ENCODE measurements at regions of chr15 and their contacts with region 1.

Region 1: GRCh38 chr15:59688841-59689625 is at the start of gene BNIP2:
- DNase-seq: peak; percentile 97
- ATAC-seq: peak; percentile 87
- H3K4me3 Mint-ChIP-seq: peak within 1 kb of the TSS; percentile 92
- H3K27ac Mint-ChIP-seq: peak within 1 kb of the TSS; percentile 96
- H3K4me1 Mint-ChIP-seq: peaks cover 52% of the 10 kb centered on the region
- H3K27me3 Mint-ChIP-seq: no peaks in the 10 kb centered on the region
- CTCF ChIP-seq: no peak
- total RNA-seq, gene BNIP2: 80.1 and 82.9 TPM in 2 replicates

Region 2: DNA sequence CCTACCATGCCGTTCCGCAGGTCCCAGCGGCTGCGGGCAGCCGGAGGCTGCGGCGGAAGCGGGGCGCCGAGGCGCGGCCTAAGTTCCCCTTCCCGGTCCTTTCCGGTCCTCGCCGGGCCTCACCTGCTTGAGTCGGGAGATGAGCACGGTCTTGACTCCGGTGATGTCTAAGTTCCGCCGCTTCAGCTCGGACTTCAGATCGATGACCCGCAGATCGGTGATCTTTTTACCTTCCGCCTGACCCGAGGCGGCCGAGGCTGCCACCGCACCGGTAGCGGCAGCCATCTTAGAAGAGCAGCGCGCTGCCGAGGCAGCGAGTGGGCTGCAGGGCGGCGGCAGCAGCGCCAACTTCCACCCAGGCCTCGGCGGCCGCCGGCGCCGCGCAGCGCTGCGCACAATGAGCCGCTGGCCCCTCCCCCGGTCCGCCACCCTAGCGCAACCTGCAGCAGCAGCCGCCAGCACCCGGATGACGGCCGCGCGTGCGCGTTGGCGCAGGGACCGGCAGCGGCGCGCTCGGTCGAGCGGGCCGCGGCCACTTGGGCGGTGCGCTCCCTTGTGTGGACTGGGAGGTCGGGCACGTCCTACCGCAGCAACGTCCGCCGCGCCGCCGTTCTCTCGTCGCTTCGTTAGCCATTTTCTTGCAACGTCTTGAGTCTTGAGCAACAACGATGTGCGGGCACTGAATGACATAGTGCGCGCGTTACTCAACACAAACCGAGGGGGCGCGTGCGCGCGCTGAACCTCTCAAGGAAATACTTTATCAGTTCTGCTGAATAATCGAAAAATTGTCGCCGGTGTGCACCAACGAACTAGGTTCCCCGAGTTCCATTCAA is 755.5 kb before region 1 on chr15 and contains the start of gene SLTM:
- CTCF ChIA-PET with region 1: no interaction called
- POLR2A ChIA-PET with region 1: no interaction called
- intact Hi-C with region 1: loop called (anchors 1 kb)
- DNase-seq: peak; percentile 87
- ATAC-seq: peak; percentile 91
- H3K4me3 Mint-ChIP-seq: peak within 1 kb of the TSS; percentile 99
- H3K27ac Mint-ChIP-seq: peak within 1 kb of the TSS; percentile 100
- H3K4me1 Mint-ChIP-seq: peaks cover 29% of the 10 kb centered on the region
- H3K27me3 Mint-ChIP-seq: no peaks in the 10 kb centered on the region
- CTCF ChIP-seq: no peak
- total RNA-seq, gene SLTM: 124 and 159 TPM in 2 replicates

Region 3: DNA sequence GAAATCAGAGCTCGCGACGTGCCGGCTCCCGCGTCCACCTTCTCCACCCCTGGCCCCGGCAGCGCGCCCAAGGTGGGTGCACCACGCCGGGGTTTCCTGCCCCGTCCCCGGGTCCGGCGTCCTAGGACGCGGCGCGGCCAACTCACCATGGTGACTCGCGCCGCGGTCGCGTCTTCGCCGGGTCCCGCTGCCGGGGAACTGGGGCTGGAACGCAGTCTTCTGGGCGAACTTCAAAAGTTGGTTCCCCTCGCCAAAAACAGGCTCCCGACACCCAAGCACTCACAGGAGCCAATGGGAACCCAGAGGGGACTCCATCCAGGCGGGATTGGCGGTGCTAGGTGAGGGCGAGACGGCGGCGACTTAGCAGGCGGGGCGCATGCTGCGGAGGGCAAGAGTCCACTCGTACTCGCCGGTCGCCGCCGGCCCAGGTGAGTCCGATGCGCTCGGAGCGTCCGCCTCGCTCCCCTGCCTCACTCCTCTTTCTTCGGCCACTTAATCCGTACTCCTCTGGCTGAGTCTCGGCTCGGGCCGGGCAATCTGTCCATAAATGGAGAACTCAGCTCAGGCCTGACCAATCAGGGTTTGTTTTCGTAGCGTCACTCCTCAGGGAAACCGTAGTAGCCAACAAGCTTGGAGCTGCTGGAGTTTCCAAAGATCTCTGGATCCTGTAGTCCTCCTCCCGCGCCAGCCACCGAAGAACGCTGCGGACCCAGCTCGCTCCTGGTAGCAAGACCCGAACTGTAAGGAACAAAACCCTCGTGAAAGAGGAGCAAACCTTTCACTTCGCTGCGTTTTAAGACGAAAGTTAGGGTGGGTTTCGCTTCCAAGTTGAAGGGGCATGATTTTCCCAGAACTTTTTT is 316.5 kb before region 1 on chr15 and contains the start of gene MYO1E:
- CTCF ChIA-PET with region 1: no interaction called
- POLR2A ChIA-PET with region 1: no interaction called
- intact Hi-C with region 1: loop called (anchors 2 kb)
- DNase-seq: peak; percentile 54
- ATAC-seq: peak; percentile 62
- H3K4me3 Mint-ChIP-seq: peak within 1 kb of the TSS; percentile 96
- H3K27ac Mint-ChIP-seq: peak within 1 kb of the TSS; percentile 89
- H3K4me1 Mint-ChIP-seq: peaks cover 64% of the 10 kb centered on the region
- H3K27me3 Mint-ChIP-seq: no peaks in the 10 kb centered on the region
- CTCF ChIP-seq: no peak
- total RNA-seq, gene MYO1E: 185 and 186 TPM in 2 replicates

Region 4: DNA sequence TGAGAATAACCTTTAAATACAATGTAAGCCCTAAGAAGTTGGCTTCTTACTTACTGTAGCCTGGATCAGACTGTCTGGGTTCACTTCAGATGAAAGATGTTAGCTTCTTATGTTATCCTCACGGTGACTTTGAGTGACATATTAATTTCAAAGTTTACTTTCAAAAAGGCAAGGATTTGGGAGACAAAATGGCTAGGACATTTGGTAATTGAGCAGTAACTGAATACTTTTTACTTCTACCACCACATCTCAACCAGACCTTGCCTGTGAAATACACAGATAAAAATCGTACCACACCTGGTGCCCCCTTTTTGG is 36.1 kb after region 1 on chr15:
- CTCF ChIA-PET with region 1: interaction called, 9 read pairs
- POLR2A ChIA-PET with region 1: interaction called, 3 read pairs
- intact Hi-C with region 1: loop called (anchors 1 kb)
- DNase-seq: no peak
- ATAC-seq: no peak
- H3K4me3 Mint-ChIP-seq: no peak overlapping the region
- H3K27ac Mint-ChIP-seq: no peak overlapping the region
- H3K4me1 Mint-ChIP-seq: no peaks in the 10 kb centered on the region
- H3K27me3 Mint-ChIP-seq: peaks cover 18% of the 10 kb centered on the region
- CTCF ChIP-seq: no peak

Region 5: GRCh38 chr15:60326824-60327654 is 638.0 kb after region 1 on chr15:
- CTCF ChIA-PET with region 1: interaction called, 21 read pairs
- POLR2A ChIA-PET with region 1: no interaction called
- intact Hi-C with region 1: loop called (anchors 1 kb)
- DNase-seq: no peak
- ATAC-seq: peak; percentile 37
- H3K4me3 Mint-ChIP-seq: no peak overlapping the region
- H3K27ac Mint-ChIP-seq: no peak overlapping the region
- H3K4me1 Mint-ChIP-seq: peaks cover 4% of the 10 kb centered on the region
- H3K27me3 Mint-ChIP-seq: peaks cover 35% of the 10 kb centered on the region
- CTCF ChIP-seq: no peak

Region 6: DNA sequence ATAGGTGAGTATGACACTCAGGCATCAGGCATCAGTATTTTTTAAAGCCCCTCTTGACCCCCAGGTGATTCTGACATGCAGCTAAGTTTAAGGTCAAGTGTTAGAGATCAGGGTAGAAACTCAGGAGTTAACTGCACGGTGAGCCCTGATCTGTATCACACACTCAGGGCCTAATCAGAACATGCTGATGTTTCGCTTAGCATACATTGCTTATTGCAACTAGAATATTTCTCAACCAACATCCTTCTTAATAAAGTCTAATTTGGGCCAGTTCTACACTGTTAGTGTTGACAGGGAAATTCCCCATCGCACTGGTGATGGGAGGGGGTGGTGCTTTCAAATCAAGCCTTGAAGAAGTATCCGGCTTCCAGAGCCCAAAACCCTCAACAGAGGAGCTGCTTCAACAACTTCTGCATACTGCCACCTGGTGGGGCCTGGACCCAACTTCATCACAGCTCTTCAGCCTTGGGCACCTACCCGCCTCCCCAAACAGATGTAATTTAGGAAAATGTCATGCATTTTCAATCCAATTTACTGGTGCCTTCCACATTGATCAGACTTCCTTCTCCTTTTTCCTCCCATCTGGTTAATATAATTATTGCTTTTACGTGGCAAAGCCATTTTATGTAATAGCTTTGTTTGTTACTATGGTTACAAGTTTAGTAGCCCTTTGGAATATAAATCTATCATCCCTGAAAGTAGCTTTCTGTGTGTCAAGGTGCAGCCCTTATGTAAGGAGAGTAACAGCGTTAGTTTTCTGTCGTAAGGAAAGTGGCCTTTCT is 1227.8 kb after region 1 on chr15:
- CTCF ChIA-PET with region 1: interaction called, 6 read pairs
- POLR2A ChIA-PET with region 1: no interaction called
- intact Hi-C with region 1: loop called (anchors 5 kb)
- DNase-seq: peak; percentile 47
- ATAC-seq: peak; percentile 97
- H3K4me3 Mint-ChIP-seq: peak overlapping the region; percentile 58
- H3K27ac Mint-ChIP-seq: peak overlapping the region; percentile 39
- H3K4me1 Mint-ChIP-seq: peaks cover 15% of the 10 kb centered on the region
- H3K27me3 Mint-ChIP-seq: no peaks in the 10 kb centered on the region
- CTCF ChIP-seq: peak; percentile 42